Mammary epithelial cell (primary cell): ENCODE measurements at regions of chr13 and their contacts with region 1.

Region 1: GRCh38 chr13:31538067-31539042 is 201.0 kb upstream of the RXFP2 start:
- DNase-seq: peak; percentile 8
- H3K4me3 ChIP-seq: no peak overlapping the region
- H3K27ac ChIP-seq: no peak overlapping the region
- H3K4me1 ChIP-seq: no peaks in the 10 kb centered on the region
- H3K27me3 ChIP-seq: peaks cover 2% of the 10 kb centered on the region
- CTCF ChIP-seq: peak; percentile 53 to 75

Region 2: GRCh38 chr13:31310786-31311185 is 227.6 kb before region 1 on chr13:
- CTCF ChIA-PET with region 1: no interaction called
- dilution Hi-C with region 1: no loop called
- in situ Hi-C with region 1: no loop called
- intact Hi-C with region 1: no loop called
- DNase-seq: peak; percentile 55
- H3K4me3 ChIP-seq: no peak overlapping the region
- H3K27ac ChIP-seq: no peak overlapping the region
- H3K4me1 ChIP-seq: peaks cover 10% of the 10 kb centered on the region
- H3K27me3 ChIP-seq: no peaks in the 10 kb centered on the region
- CTCF ChIP-seq: no peak

Region 3: DNA sequence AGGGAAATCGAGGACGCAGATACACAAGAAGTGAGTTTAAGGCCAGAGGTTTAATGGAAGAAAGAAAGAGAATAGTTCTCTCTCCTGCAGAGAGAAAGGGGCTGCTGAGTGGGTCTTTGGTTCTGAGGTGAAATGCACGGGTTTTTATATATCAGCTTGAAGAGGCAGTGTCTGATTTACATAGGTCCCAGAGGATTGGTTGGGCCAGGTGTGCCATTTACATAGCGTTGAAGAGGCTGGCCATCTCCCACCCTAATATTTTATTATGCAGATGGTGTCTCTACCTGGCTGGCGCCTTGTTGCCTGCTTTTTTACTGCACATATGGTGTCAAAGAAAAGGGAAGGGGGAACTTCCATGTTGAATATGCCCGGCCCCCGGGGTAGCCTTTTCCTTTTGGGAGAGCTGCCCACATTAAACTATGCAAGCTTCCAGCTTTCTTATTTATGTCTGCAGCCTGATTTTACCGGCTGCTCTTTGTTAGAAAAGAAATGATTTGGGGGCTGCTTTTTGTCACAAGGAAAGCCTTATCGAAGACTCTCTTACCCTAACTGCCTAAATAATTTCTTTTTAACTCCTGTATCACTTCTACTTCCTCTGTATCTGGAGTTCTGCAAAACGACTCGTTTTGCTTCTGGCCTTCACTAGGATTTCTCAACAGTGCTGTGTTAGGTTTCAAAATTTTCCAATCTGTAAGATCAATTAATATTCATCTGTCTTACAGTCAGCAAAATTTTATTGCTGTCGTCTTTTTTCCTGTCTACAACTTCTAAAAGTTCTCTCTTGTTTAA is 70.0 kb before region 1 on chr13:
- CTCF ChIA-PET with region 1: no interaction called
- dilution Hi-C with region 1: no loop called
- in situ Hi-C with region 1: no loop called
- intact Hi-C with region 1: no loop called
- DNase-seq: no peak
- H3K4me3 ChIP-seq: no peak overlapping the region
- H3K27ac ChIP-seq: no peak overlapping the region
- H3K4me1 ChIP-seq: no peaks in the 10 kb centered on the region
- H3K27me3 ChIP-seq: peaks cover 6% of the 10 kb centered on the region
- CTCF ChIP-seq: no peak

Region 4: GRCh38 chr13:31556376-31556775 is 18.0 kb after region 1 on chr13:
- CTCF ChIA-PET with region 1: no interaction called
- dilution Hi-C with region 1: no loop called
- in situ Hi-C with region 1: no loop called
- intact Hi-C with region 1: no loop called
- DNase-seq: no peak
- H3K4me3 ChIP-seq: no peak overlapping the region
- H3K27ac ChIP-seq: no peak overlapping the region
- H3K4me1 ChIP-seq: no peaks in the 10 kb centered on the region
- H3K27me3 ChIP-seq: peaks cover 3% of the 10 kb centered on the region
- CTCF ChIP-seq: no peak

Region 5: DNA sequence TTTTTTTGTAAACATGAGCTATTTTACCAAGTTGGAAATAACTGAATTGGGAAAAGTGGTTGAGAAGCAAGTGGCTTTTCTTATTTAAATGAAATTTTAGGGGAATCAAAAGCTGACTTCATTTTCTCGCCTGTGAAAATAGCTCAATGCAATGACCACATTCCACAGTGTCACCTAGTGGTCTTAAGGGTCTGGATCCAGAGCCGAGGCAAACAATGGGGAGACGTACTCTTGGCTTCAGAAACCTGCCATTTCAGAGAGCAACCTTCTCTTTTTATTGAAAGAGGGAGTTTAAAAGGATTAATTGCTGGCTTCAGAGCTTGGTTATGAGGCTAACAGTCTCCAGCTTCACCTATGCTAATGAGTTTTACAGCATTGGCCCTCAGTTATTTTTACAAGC is 161.3 kb after region 1 on chr13:
- CTCF ChIA-PET with region 1: interaction called, 34 read pairs
- dilution Hi-C with region 1: no loop called
- in situ Hi-C with region 1: no loop called
- intact Hi-C with region 1: no loop called
- DNase-seq: no peak
- H3K4me3 ChIP-seq: no peak overlapping the region
- H3K27ac ChIP-seq: no peak overlapping the region
- H3K4me1 ChIP-seq: no peaks in the 10 kb centered on the region
- H3K27me3 ChIP-seq: no peaks in the 10 kb centered on the region
- CTCF ChIP-seq: peak in 1 of 2 donors; percentile 11

Region 6: GRCh38 chr13:31742097-31742734 is 203.9 kb after region 1 on chr13:
- CTCF ChIA-PET with region 1: interaction called, 5 read pairs
- dilution Hi-C with region 1: no loop called
- in situ Hi-C with region 1: loop called (anchors 10 to 25 kb)
- intact Hi-C with region 1: loop called (anchors 1 kb)
- DNase-seq: peak; percentile 45
- H3K4me3 ChIP-seq: no peak overlapping the region
- H3K27ac ChIP-seq: no peak overlapping the region
- H3K4me1 ChIP-seq: no peaks in the 10 kb centered on the region
- H3K27me3 ChIP-seq: no peaks in the 10 kb centered on the region
- CTCF ChIP-seq: peak; percentile 97 to 98